Activated CD4-positive, alpha-beta T cell treated with anti-CD3 and anti-CD28 coated beads for 36 hours (primary cell): ENCODE measurements at regions of chr9 and their contacts with region 1.

Region 1: DNA sequence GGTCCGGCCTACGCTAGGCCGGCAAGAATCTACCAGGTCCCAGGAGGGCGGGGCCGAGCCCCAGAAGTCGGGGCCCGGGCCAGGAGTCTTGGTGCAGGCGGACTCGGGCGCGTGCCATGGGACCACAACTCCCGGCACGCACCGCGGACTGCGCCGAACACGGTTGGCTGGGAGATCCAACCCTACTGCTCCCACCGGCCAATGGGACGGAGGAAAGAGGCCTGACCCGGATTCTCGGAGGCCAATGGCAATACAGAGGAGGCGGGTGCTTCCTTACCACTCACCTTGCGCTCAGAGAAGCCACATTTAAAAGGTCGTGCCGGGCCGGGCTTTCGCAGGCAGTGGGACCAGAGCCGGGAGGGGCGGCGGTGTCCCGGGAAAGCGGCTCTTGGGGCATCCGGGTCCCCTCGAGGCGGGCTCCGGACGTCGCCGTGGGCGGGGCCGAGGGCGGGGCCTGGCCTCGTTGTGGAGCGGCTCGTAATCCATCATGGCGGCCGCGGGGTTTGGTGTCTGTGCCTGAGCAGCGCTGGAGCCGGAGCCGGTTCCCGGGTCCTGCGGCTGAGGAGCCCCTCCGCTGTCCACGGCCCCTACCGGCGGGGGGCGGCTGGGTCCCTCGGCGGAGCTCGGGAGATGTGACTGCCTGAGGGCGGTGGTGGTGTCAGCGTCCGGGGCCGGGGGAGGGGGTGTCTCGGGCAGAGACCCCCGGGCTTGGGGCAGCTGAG is 19.1 kb downstream of the EXOSC2 start:
- DNase-seq: peak; percentile 98
- ATAC-seq: peak; percentile 99
- H3K4me3 Mint-ChIP-seq: peak overlapping the region; percentile 82
- H3K27ac Mint-ChIP-seq: peak overlapping the region; percentile 87
- H3K4me1 Mint-ChIP-seq: peaks cover 35% of the 10 kb centered on the region
- H3K27me3 Mint-ChIP-seq: no peaks in the 10 kb centered on the region

Region 2: GRCh38 chr9:130693426-130694191 is 19.1 kb before region 1 on chr9 and contains the start of gene EXOSC2:
- CTCF ChIA-PET with region 1: interaction called, 35 read pairs
- POLR2A ChIA-PET with region 1: interaction called, 3 read pairs
- intact Hi-C with region 1: loop called (anchors 1 to 2 kb)
- DNase-seq: peak; percentile 99
- ATAC-seq: peak; percentile 98
- H3K4me3 Mint-ChIP-seq: peak within 1 kb of the TSS; percentile 97
- H3K27ac Mint-ChIP-seq: peak within 1 kb of the TSS; percentile 98
- H3K4me1 Mint-ChIP-seq: peaks cover 44% of the 10 kb centered on the region
- H3K27me3 Mint-ChIP-seq: no peaks in the 10 kb centered on the region
- total RNA-seq, gene EXOSC2: 67.9 to 86.0 TPM

Region 3: GRCh38 chr9:130770679-130771442 is 58.1 kb after region 1 on chr9:
- CTCF ChIA-PET with region 1: no interaction called
- POLR2A ChIA-PET with region 1: no interaction called
- intact Hi-C with region 1: loop called in 1 of 2 experiments (anchors 5 kb)
- DNase-seq: no peak
- ATAC-seq: peak; percentile 73
- H3K4me3 Mint-ChIP-seq: no peak overlapping the region
- H3K27ac Mint-ChIP-seq: no peak overlapping the region
- H3K4me1 Mint-ChIP-seq: peaks cover 23% of the 10 kb centered on the region
- H3K27me3 Mint-ChIP-seq: no peaks in the 10 kb centered on the region

Region 4: GRCh38 chr9:130834371-130835311 is 121.9 kb after region 1 on chr9 and contains the start of gene ABL1:
- CTCF ChIA-PET with region 1: interaction called, 4 read pairs
- POLR2A ChIA-PET with region 1: interaction called, 3 read pairs
- intact Hi-C with region 1: loop called (anchors 1 to 2 kb)
- DNase-seq: peak; percentile 87
- ATAC-seq: peak; percentile 91
- H3K4me3 Mint-ChIP-seq: peak within 1 kb of the TSS; percentile 98
- H3K27ac Mint-ChIP-seq: peak within 1 kb of the TSS; percentile 97
- H3K4me1 Mint-ChIP-seq: peaks cover 33% of the 10 kb centered on the region
- H3K27me3 Mint-ChIP-seq: no peaks in the 10 kb centered on the region
- total RNA-seq, gene ABL1: 31.8 to 32.3 TPM

Region 5: GRCh38 chr9:131006601-131007000 is 293.9 kb after region 1 on chr9:
- CTCF ChIA-PET with region 1: no interaction called
- POLR2A ChIA-PET with region 1: no interaction called
- intact Hi-C with region 1: no loop called
- DNase-seq: no peak
- ATAC-seq: no peak
- H3K4me3 Mint-ChIP-seq: no peak overlapping the region
- H3K27ac Mint-ChIP-seq: no peak overlapping the region
- H3K4me1 Mint-ChIP-seq: no peaks in the 10 kb centered on the region
- H3K27me3 Mint-ChIP-seq: peaks cover 10% of the 10 kb centered on the region

Region 6: GRCh38 chr9:131277910-131278701 is 565.4 kb after region 1 on chr9:
- CTCF ChIA-PET with region 1: no interaction called
- POLR2A ChIA-PET with region 1: no interaction called
- intact Hi-C with region 1: loop called in 1 of 2 experiments (anchors 10 kb)
- DNase-seq: peak; percentile 88
- ATAC-seq: peak; percentile 55
- H3K4me3 Mint-ChIP-seq: peak overlapping the region; percentile 75
- H3K27ac Mint-ChIP-seq: peak overlapping the region; percentile 71
- H3K4me1 Mint-ChIP-seq: peaks cover 22% of the 10 kb centered on the region
- H3K27me3 Mint-ChIP-seq: peaks cover 7% of the 10 kb centered on the region